CD8-positive, alpha-beta T cell (primary cell): ENCODE measurements at regions of chr14 and their contacts with region 1.

Region 1: GRCh38 chr14:21233457-21234076 is 35.7 kb downstream of the HNRNPC start:
- DNase-seq: peak in 2 of 9 experiments; percentile 46 to 57
- ATAC-seq: no peak
- H3K4me3 ChIP-seq: no peak overlapping the region
- H3K4me3 Mint-ChIP-seq: peak overlapping the region; percentile 63
- H3K27ac ChIP-seq: peak overlapping the region in 1 of 2 experiments; percentile 34
- H3K27ac Mint-ChIP-seq: peak overlapping the region; percentile 84
- H3K4me1 ChIP-seq: peaks cover 93% of the 10 kb centered on the region
- H3K4me1 Mint-ChIP-seq: peaks cover 88% of the 10 kb centered on the region
- H3K27me3 ChIP-seq: no peaks in the 10 kb centered on the region
- H3K27me3 Mint-ChIP-seq: no peaks in the 10 kb centered on the region
- CTCF ChIP-seq: no peak

Region 2: DNA sequence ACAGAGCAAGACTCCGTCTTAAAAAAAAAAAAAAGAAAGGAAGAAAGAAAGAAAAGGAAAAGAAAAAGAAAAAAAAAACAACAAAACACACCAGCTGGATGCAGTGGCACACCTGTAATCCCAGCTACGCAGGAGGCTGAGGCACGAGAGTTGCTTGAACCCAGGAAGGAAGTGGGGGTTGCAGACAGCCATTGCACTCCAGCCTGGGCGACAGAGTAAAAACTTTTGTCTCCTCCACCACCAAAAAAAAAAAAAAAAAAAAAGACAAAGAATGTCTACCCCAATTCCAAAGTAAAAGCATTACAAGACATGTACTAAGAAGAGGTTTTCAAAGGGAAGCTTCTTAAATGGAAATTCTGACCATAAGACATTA is 17.7 kb before region 1 on chr14:
- CTCF ChIA-PET with region 1: no interaction called
- POLR2A ChIA-PET with region 1: interaction called, 4 read pairs
- intact Hi-C with region 1: loop called (anchors 2 kb)
- DNase-seq: peak in 3 of 9 experiments; percentile 41 to 52 (median 42)
- ATAC-seq: peak; percentile 50
- H3K4me3 ChIP-seq: no peak overlapping the region
- H3K4me3 Mint-ChIP-seq: peak overlapping the region; percentile 62
- H3K27ac ChIP-seq: peak overlapping the region in 1 of 2 experiments; percentile 52
- H3K27ac Mint-ChIP-seq: peak overlapping the region; percentile 85
- H3K4me1 ChIP-seq: peaks cover 40% of the 10 kb centered on the region
- H3K4me1 Mint-ChIP-seq: peaks cover 69% of the 10 kb centered on the region
- H3K27me3 ChIP-seq: no peaks in the 10 kb centered on the region
- H3K27me3 Mint-ChIP-seq: no peaks in the 10 kb centered on the region
- CTCF ChIP-seq: no peak

Region 3: DNA sequence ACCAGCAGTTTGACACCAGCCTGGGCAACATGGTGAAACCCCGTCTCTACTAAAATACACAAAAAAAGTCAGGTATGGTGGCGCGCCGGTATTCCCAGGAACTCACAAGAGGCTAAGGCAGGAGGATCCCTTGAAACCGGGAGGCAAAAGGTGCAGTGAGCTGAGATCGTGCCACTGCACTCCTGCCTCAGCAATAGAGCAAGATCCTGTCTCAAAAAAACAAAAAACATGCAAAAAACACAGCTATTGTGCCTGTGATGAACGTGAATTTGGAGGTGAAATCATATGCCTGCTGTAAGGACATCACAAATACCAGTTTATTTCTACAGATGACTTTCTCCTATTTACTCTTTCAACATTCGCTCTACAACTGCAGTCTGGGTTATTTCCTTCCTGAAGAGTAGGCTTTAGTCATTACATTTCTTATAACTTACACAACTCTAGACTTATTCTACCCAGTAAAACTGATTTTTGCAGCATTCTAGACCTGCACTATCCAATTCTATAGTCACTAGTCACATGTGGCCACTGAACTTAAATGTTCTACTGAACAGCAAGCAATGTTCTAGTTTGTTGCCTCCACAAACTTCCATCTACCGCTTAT is 12.6 kb before region 1 on chr14:
- CTCF ChIA-PET with region 1: no interaction called
- POLR2A ChIA-PET with region 1: interaction called, 4 read pairs
- intact Hi-C with region 1: loop called (anchors 2 kb)
- DNase-seq: no peak
- ATAC-seq: peak; percentile 33
- H3K4me3 ChIP-seq: no peak overlapping the region
- H3K4me3 Mint-ChIP-seq: peak overlapping the region; percentile 27
- H3K27ac ChIP-seq: peak overlapping the region in 1 of 2 experiments; percentile 9
- H3K27ac Mint-ChIP-seq: peak overlapping the region; percentile 83
- H3K4me1 ChIP-seq: peaks cover 46% of the 10 kb centered on the region
- H3K4me1 Mint-ChIP-seq: peaks cover 72% of the 10 kb centered on the region
- H3K27me3 ChIP-seq: no peaks in the 10 kb centered on the region
- H3K27me3 Mint-ChIP-seq: no peaks in the 10 kb centered on the region
- CTCF ChIP-seq: no peak

Region 4: GRCh38 chr14:21263656-21264411 is 30.3 kb after region 1 on chr14:
- CTCF ChIA-PET with region 1: interaction called, 3 read pairs
- POLR2A ChIA-PET with region 1: no interaction called
- intact Hi-C with region 1: loop called (anchors 2 kb)
- DNase-seq: peak in 2 of 9 experiments; percentile 66 to 76
- ATAC-seq: peak; percentile 62
- H3K4me3 ChIP-seq: peak overlapping the region in 1 of 2 experiments; percentile 0
- H3K4me3 Mint-ChIP-seq: peak overlapping the region; percentile 99
- H3K27ac ChIP-seq: peak overlapping the region in 1 of 2 experiments; percentile 96
- H3K27ac Mint-ChIP-seq: peak overlapping the region; percentile 72
- H3K4me1 ChIP-seq: peaks cover 61% of the 10 kb centered on the region
- H3K4me1 Mint-ChIP-seq: peaks cover 75% of the 10 kb centered on the region
- H3K27me3 ChIP-seq: no peaks in the 10 kb centered on the region
- H3K27me3 Mint-ChIP-seq: no peaks in the 10 kb centered on the region
- CTCF ChIP-seq: no peak